Common myeloid progenitor, CD34-positive (primary cell): ENCODE measurements at regions of chr1 and their contacts with region 1.

Region 1: DNA sequence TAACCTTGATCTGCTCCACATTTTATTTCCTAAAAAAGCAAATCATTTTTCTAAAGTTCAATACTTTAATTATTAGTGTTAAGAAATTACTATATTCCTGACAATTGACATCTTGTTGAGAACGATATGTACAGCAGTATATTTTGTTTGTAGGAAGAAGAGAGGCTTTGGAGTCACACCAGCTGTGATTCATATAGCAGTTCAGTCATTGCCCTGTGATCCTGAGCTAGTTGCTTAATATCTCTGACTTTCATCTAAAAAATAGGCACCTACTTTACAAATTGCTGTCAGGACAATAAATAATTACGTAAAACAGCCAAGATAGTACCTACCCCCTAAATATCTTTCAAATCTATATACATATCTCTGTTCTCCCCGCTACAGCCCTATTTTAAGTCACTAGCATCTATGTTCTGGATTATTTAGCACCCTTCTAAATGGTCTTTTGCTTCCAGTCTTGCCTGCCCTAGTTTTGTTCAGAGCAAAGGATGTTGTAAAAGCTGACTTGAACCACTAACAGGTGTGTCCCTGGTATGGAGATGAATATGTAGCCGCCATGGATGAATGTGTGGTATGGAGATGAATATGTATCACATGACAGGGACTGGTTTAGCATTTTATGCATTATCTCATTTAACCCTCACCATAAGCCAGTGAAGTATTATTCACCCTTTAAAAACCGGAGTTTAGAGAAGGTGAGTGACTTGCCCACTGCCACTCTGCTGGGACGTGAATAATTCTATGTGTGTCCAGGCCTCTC is 42.2 kb downstream of the RNF220 start:
- DNase-seq: no peak
- H3K4me3 ChIP-seq: no peak overlapping the region
- H3K27ac ChIP-seq: no peak overlapping the region
- H3K4me1 ChIP-seq: no peaks in the 10 kb centered on the region
- H3K27me3 ChIP-seq: no peaks in the 10 kb centered on the region

Region 2: GRCh38 chr1:44460107-44460882 is 13.1 kb after region 1 on chr1:
- CTCF ChIA-PET with region 1: interaction called, 10 read pairs
- POLR2A ChIA-PET with region 1: interaction called, 7 read pairs
- DNase-seq: peak in 2 of 3 donors; percentile 61 to 69
- H3K4me3 ChIP-seq: peak overlapping the region in 3 of 7 experiments; percentile 34 to 46 (median 44)
- H3K27ac ChIP-seq: peak overlapping the region in 1 of 2 experiments; percentile 51
- H3K4me1 ChIP-seq: peaks cover 6 to 37% (median 30%) of the 10 kb centered on the region in 4 experiments
- H3K27me3 ChIP-seq: no peaks in the 10 kb centered on the region